CD4-positive, alpha-beta memory T cell (primary cell): ENCODE measurements at regions of chr17 and their contacts with region 1.

Region 1: DNA sequence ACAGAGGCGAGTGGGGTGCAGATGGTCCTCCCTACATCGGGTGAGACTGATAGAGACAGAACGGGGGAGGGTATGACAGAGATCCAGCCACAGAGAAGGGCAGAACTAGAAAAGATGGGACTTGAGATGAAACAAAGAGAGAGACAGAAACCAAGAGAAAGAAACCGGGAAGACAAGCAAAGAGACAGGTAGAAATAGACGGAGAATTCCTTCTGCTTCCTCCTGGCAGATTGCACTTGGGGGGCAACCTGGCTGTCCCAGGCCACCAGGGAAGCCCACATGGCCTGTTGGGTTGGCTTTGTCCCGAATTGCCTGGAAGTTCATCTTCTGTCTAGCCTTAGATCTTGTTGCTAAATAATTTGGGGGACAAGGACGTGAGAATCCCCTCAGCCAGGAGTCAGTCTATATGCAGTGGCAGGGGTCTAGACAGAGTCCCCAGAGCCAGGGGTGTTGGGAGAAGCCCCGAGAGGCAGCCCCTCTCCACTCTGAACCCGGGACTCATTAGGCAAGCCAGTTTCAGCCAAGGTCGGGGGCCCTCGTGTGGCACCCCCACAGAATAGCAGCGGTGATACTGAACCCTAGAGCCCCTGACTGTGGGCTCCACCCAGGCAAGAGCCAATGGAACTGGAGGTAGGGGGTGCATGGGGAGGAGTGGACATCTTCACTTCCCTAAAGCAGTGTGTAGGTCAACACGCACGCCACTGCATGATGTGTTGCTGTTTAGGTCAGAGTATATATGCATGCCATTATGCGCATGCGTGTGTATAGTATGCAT is 627 bp upstream of the TSPOAP1 start:
- DNase-seq: peak; percentile 67 to 79 (median 73)
- H3K4me3 ChIP-seq: peak overlapping the region; percentile 82 to 99
- H3K4me3 Mint-ChIP-seq: peak overlapping the region; percentile 88 to 99 (median 98)
- H3K27ac ChIP-seq: peak overlapping the region; percentile 97
- H3K27ac Mint-ChIP-seq: peak overlapping the region; percentile 93 to 99 (median 97)
- H3K4me1 ChIP-seq: peaks cover 47% of the 10 kb centered on the region
- H3K4me1 Mint-ChIP-seq: peaks cover 25 to 72% (median 36%) of the 10 kb centered on the region in 4 donors
- H3K27me3 ChIP-seq: no peaks in the 10 kb centered on the region
- H3K27me3 Mint-ChIP-seq: no peaks in the 10 kb centered on the region

Region 2: DNA sequence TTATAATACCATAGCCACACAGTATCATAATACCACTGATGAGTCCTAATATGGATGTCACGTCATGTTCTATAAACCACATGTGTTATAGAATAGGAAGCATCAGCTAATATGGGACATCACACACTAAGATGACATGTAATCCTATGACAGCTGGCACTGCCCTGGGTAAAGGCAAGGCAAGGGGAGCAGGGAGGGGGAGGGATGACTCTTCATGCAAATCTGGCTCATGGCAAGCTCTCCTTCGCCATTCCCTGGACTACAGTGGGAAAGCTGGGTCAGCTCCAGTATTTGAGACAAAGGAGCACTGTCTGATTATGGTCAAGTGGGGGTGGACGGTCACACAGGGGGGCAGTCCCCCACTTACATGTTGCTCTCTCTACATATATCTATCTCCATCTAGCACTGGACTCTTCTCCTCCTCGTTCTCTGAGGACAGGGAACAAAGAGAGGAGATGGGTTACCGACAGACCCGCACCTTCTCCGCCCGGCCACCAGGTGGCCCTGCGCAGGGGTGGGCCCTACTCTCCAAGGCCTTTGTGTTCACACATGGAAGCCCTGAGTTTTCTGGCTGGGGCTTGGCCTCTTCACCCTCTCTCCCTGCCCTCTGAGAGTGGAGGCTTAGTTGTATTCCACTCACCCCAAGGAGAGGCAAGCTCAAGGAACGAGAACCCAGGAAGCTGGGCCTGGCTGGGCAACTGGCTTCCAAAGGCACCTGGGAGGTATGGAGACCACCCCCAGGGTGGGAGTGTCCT is 25.1 kb before region 1 on chr17:
- CTCF ChIA-PET with region 1: interaction called, 3 read pairs
- POLR2A ChIA-PET with region 1: interaction called, 21 read pairs
- intact Hi-C with region 1: loop called (anchors 1 kb)
- DNase-seq: peak in 4 of 5 donors; percentile 59 to 65 (median 62)
- H3K4me3 ChIP-seq: no peak overlapping the region
- H3K4me3 Mint-ChIP-seq: no peak overlapping the region
- H3K27ac ChIP-seq: no peak overlapping the region
- H3K27ac Mint-ChIP-seq: peak overlapping the region in 4 of 7 donors; percentile 0 to 70 (median 44)
- H3K4me1 ChIP-seq: peaks cover 4% of the 10 kb centered on the region
- H3K4me1 Mint-ChIP-seq: peaks cover 4 to 10% (median 5%) of the 10 kb centered on the region in 4 donors
- H3K27me3 ChIP-seq: no peaks in the 10 kb centered on the region
- H3K27me3 Mint-ChIP-seq: no peaks in the 10 kb centered on the region

Region 3: GRCh38 chr17:58364270-58364942 is 35.2 kb after region 1 on chr17:
- CTCF ChIA-PET with region 1: no interaction called
- POLR2A ChIA-PET with region 1: interaction called, 13 read pairs
- intact Hi-C with region 1: no loop called
- DNase-seq: no peak
- H3K4me3 ChIP-seq: no peak overlapping the region
- H3K4me3 Mint-ChIP-seq: no peak overlapping the region
- H3K27ac ChIP-seq: no peak overlapping the region
- H3K27ac Mint-ChIP-seq: no peak overlapping the region
- H3K4me1 ChIP-seq: no peaks in the 10 kb centered on the region
- H3K4me1 Mint-ChIP-seq: peaks cover 0 to 1% (median 0%) of the 10 kb centered on the region in 4 donors
- H3K27me3 ChIP-seq: no peaks in the 10 kb centered on the region
- H3K27me3 Mint-ChIP-seq: peaks cover 0 to 1% of the 10 kb centered on the region in 2 donors